Activated CD8-positive, alpha-beta T cell treated with anti-CD3 and anti-CD28 coated beads, Interleukin-2, amount 10 ng/mL, durations not matched to agents 7 days and 5 days (primary cell): ENCODE measurements at regions of chr15 and their contacts with region 1.

Region 1: DNA sequence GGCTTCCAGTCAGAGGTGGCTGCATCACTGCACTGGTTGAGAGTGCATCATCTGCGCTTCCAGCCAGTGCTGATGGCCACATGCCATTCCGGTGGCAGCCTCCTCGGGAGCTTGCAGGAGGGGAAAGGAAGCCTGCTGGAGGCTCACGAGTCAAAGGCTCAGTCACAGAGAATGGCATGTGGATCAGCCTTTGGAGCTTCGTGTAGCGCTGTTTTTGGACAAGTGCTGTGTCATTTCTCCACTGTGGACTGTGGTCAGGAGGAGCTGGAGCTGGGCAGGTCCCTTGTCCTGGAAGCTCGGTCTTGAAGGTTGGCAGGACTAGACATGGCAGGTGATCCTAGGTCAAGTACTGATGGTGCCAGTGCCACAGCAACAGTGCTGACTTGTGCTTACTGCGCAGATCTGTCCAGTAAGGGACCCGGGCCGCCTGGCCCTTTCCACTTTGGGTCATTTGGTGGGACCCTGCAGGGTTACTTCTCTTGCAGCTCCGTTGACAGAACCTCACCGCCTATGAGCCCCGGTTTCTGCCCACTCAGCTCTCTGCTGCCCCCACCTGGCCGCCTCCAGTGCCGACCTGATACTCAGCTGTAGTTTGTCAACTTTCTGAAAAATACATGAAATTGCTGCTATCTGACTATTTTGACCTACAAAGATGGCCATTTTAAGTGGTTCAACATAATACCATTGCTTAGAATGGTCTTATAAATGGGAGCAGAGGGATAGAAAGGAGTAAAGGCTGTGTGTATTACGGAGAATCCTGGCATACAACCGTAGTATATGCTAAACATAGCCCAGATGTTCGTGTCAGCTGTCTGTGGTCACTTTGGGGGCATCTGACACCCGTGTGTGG is 27.6 kb upstream of the TRPM1 start:
- DNase-seq: peak; percentile 86
- ATAC-seq: peak; percentile 88
- H3K4me3 Mint-ChIP-seq: no peak overlapping the region
- H3K27ac Mint-ChIP-seq: no peak overlapping the region
- H3K4me1 Mint-ChIP-seq: no peaks in the 10 kb centered on the region
- H3K27me3 Mint-ChIP-seq: peaks cover 7% of the 10 kb centered on the region

Region 2: DNA sequence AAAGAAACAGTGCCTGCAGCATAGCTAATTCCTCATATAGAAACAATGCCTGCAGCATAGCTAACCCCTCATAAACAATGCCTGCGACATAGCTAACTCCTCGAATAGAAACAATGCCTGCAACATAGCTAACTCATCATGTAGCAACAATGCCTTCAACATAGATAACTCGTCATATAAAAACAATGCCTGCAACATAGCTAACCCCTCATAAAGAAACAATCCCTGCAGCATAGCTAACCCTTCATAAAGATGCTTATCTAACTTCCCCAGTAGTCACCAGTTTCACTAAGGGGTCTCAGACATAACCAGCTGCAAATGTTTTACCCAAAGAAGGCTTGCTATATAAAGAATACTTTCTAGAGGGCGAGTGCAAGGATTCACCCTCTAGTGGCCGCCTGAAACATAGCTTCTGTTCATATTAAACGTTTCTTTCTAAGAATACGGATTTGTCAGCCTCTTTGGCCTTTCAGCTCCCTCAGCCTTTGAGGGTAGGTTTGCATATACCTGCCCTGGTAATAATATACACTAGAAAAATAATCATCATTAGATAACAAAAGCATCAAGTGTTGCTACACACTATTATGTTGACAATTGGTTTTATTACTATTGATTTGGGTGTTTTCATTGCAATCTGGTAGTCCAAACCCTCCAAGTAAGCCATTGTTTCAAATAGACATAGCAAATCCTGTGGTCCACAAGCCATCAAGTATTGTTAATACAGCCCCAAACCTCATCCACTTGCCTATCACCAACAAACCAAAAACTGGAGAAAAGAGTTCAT is 269.9 kb before region 1 on chr15:
- CTCF ChIA-PET with region 1: interaction called, 21 read pairs
- POLR2A ChIA-PET with region 1: no interaction called
- DNase-seq: peak; percentile 44
- ATAC-seq: peak; percentile 57
- H3K4me3 Mint-ChIP-seq: no peak overlapping the region
- H3K27ac Mint-ChIP-seq: no peak overlapping the region
- H3K4me1 Mint-ChIP-seq: no peaks in the 10 kb centered on the region
- H3K27me3 Mint-ChIP-seq: peaks cover 8% of the 10 kb centered on the region

Region 3: GRCh38 chr15:30969696-30970095 is 159.4 kb before region 1 on chr15:
- CTCF ChIA-PET with region 1: interaction called, 18 read pairs
- POLR2A ChIA-PET with region 1: no interaction called
- DNase-seq: no peak
- ATAC-seq: no peak
- H3K4me3 Mint-ChIP-seq: no peak overlapping the region
- H3K27ac Mint-ChIP-seq: no peak overlapping the region
- H3K4me1 Mint-ChIP-seq: peaks cover 54% of the 10 kb centered on the region
- H3K27me3 Mint-ChIP-seq: no peaks in the 10 kb centered on the region

Region 4: GRCh38 chr15:31027910-31028578 is 101.1 kb before region 1 on chr15:
- CTCF ChIA-PET with region 1: interaction called, 12 read pairs
- POLR2A ChIA-PET with region 1: no interaction called
- DNase-seq: no peak
- ATAC-seq: no peak
- H3K4me3 Mint-ChIP-seq: no peak overlapping the region
- H3K27ac Mint-ChIP-seq: no peak overlapping the region
- H3K4me1 Mint-ChIP-seq: peaks cover 15% of the 10 kb centered on the region
- H3K27me3 Mint-ChIP-seq: peaks cover 15% of the 10 kb centered on the region

Region 5: DNA sequence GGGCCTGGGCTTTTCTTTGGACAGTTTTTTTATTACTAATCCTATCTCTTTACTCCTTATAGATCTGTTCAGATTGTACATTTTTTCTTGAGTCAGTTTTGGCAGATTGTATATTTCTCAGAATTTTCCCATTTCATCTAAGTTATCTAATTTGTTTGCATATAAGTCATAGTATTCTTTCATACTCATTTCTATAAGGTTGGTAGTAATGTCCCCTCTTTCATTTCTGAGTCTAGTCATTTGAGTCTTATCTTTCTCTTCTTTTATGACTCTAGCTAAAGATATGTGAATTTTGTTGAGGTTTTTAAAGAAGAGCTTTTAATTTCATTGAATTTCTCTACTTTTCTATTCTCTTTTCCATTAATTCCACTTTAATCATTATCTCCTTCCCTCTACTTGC is 54.8 kb before region 1 on chr15:
- CTCF ChIA-PET with region 1: no interaction called
- POLR2A ChIA-PET with region 1: no interaction called
- DNase-seq: no peak
- ATAC-seq: no peak
- H3K4me3 Mint-ChIP-seq: no peak overlapping the region
- H3K27ac Mint-ChIP-seq: no peak overlapping the region
- H3K4me1 Mint-ChIP-seq: no peaks in the 10 kb centered on the region
- H3K27me3 Mint-ChIP-seq: peaks cover 34% of the 10 kb centered on the region

Region 6: DNA sequence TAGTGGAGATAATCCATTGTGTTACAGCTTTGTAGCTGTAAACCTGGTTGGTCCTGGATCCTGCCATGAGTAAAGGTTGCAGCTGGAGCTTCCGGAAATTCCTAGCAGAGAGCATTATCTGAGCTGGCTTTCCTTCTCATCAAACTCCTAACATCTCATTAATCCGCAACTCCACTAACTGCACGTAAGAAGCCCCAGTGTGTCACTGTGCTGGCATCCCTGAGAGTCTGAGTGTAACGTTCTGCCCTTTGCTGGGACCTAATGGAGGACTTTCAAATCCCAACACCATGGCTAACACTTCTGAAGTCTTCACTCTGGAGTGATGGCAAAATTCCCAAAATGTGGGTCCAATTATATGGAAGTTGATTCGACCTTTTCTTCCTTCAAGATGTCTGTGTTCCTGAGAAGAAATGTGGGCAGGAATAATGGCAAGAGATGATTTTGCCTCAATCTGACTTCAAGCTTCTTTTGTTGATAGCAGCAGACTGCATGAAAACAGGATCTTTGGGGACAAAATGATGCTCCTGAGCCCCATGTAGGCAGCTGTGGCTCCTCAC is 18.0 kb before region 1 on chr15:
- CTCF ChIA-PET with region 1: interaction called, 16 read pairs
- POLR2A ChIA-PET with region 1: no interaction called
- DNase-seq: no peak
- ATAC-seq: no peak
- H3K4me3 Mint-ChIP-seq: no peak overlapping the region
- H3K27ac Mint-ChIP-seq: no peak overlapping the region
- H3K4me1 Mint-ChIP-seq: peaks cover 7% of the 10 kb centered on the region
- H3K27me3 Mint-ChIP-seq: peaks cover 11% of the 10 kb centered on the region

Region 7: GRCh38 chr15:31252171-31252785 is 123.1 kb after region 1 on chr15:
- CTCF ChIA-PET with region 1: no interaction called
- POLR2A ChIA-PET with region 1: no interaction called
- DNase-seq: no peak
- ATAC-seq: no peak
- H3K4me3 Mint-ChIP-seq: no peak overlapping the region
- H3K27ac Mint-ChIP-seq: no peak overlapping the region
- H3K4me1 Mint-ChIP-seq: peaks cover 28% of the 10 kb centered on the region
- H3K27me3 Mint-ChIP-seq: peaks cover 10% of the 10 kb centered on the region